ENCODE measurements at regions of chrX and their contacts with region 1.

Region 1: GRCh38 chrX:19747652-19748610 is 139.5 kb downstream of the SH3KBP1 start:
- DNase-seq: no peak
- ATAC-seq: peak; percentile 48
- H3K4me3 ChIP-seq: no peak overlapping the region
- H3K27ac ChIP-seq: peak overlapping the region; percentile 91
- H3K4me1 ChIP-seq: peaks cover 59% of the 10 kb centered on the region
- H3K27me3 ChIP-seq: no peaks in the 10 kb centered on the region
- CTCF ChIP-seq: no peak
- EP300 ChIP-seq: peak in 1 of 2 experiments; percentile 33; a peak in 1 of 4 replicates
- POLR2A ChIP-seq: no peak
- RAD21 ChIP-seq: no peak

Region 2: GRCh38 chrX:19725641-19726040 is 22.3 kb before region 1 on chrX:
- CTCF ChIA-PET with region 1: interaction called, 15 read pairs
- POLR2A ChIA-PET with region 1: interaction called, 4 read pairs
- RAD21 ChIA-PET with region 1: interaction called, 14 read pairs
- SMC1A ChIA-PET with region 1: interaction called, 624 read pairs
- in situ Hi-C with region 1: no loop called
- intact Hi-C with region 1: no loop called
- DNase-seq: no peak
- ATAC-seq: peak; percentile 18
- H3K4me3 ChIP-seq: no peak overlapping the region
- H3K27ac ChIP-seq: no peak overlapping the region
- H3K4me1 ChIP-seq: peaks cover 2% of the 10 kb centered on the region
- H3K27me3 ChIP-seq: no peaks in the 10 kb centered on the region
- CTCF ChIP-seq: no peak
- EP300 ChIP-seq: no peak
- POLR2A ChIP-seq: no peak; the same call in 1 of the 2 replicates
- RAD21 ChIP-seq: no peak

Region 3: GRCh38 chrX:19765628-19766027 is 17.7 kb after region 1 on chrX:
- CTCF ChIA-PET with region 1: interaction called, 16 read pairs
- POLR2A ChIA-PET with region 1: interaction called, 42 read pairs
- RAD21 ChIA-PET with region 1: interaction called, 65 read pairs
- SMC1A ChIA-PET with region 1: interaction called, 624 read pairs
- in situ Hi-C with region 1: no loop called
- intact Hi-C with region 1: no loop called
- DNase-seq: no peak
- ATAC-seq: peak; percentile 19
- H3K4me3 ChIP-seq: no peak overlapping the region
- H3K27ac ChIP-seq: no peak overlapping the region
- H3K4me1 ChIP-seq: peaks cover 30% of the 10 kb centered on the region
- H3K27me3 ChIP-seq: no peaks in the 10 kb centered on the region
- CTCF ChIP-seq: no peak
- EP300 ChIP-seq: no peak
- POLR2A ChIP-seq: no peak
- RAD21 ChIP-seq: no peak

Region 4: DNA sequence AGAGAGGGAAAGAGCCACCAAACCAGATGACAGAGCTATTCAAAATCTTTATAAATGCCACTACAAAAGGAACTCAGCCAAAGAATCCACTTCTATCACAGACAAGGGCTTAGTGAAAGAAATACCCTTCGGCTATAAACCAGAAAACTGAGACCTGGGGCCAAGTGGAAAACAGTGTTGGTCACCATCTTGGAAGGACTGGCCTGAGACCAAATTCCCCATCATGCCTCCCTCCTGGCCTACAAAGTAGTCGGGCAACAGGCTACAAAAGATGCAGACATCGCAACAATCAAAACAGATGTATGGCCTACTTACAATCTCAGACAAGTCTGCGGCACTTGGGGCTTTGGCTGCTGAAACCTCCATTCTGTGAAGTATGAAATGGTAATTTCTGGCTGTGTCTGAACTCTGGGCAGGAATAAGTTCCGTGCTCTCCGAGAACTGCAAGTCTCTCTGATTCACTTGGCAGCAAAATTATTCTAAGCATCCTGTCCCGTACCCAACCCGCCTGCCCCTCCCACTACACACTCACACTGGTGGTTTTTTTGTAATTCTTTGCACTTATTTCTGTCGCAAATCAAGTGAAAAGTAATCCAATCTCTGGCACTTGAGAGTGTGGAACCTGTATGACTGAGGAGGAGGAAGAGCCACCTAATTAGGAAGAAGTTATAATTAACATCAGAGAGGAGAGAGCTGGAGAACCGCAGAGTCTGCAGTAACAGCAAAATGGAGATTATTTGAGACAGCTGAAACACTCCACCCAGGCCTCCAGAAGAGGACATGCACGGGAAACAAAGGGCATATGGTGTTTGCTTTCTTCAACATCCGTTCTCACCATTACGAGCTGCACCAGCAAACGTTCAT is 51.6 kb after region 1 on chrX:
- CTCF ChIA-PET with region 1: interaction called, 3 read pairs
- POLR2A ChIA-PET with region 1: no interaction called
- RAD21 ChIA-PET with region 1: interaction called, 9 read pairs
- SMC1A ChIA-PET with region 1: interaction called, 12 read pairs
- in situ Hi-C with region 1: no loop called
- intact Hi-C with region 1: loop called (anchors 5 kb)
- DNase-seq: no peak
- ATAC-seq: no peak
- H3K4me3 ChIP-seq: peak overlapping the region; percentile 8; the same call in 1 of the 2 replicates
- H3K27ac ChIP-seq: peak overlapping the region; percentile 73
- H3K4me1 ChIP-seq: peaks cover 19% of the 10 kb centered on the region
- H3K27me3 ChIP-seq: no peaks in the 10 kb centered on the region
- CTCF ChIP-seq: no peak
- EP300 ChIP-seq: no peak
- POLR2A ChIP-seq: no peak
- RAD21 ChIP-seq: no peak

Region 5: GRCh38 chrX:19840899-19841648 is 93.1 kb after region 1 on chrX:
- CTCF ChIA-PET with region 1: interaction called, 4 read pairs
- POLR2A ChIA-PET with region 1: interaction called, 7 read pairs
- RAD21 ChIA-PET with region 1: interaction called, 21 read pairs
- SMC1A ChIA-PET with region 1: interaction called, 12 read pairs
- in situ Hi-C with region 1: no loop called
- intact Hi-C with region 1: loop called (anchors 5 kb)
- DNase-seq: peak; percentile 64
- ATAC-seq: peak; percentile 74
- H3K4me3 ChIP-seq: no peak overlapping the region
- H3K27ac ChIP-seq: peak overlapping the region; percentile 81
- H3K4me1 ChIP-seq: peaks cover 30% of the 10 kb centered on the region
- H3K27me3 ChIP-seq: no peaks in the 10 kb centered on the region
- CTCF ChIP-seq: no peak
- EP300 ChIP-seq: 0 out of 4 replicates have a peak, but pooled peaks of 1 of the 2 experiments have one; percentile 10
- POLR2A ChIP-seq: peak; percentile 66
- RAD21 ChIP-seq: no peak

Region 6: DNA sequence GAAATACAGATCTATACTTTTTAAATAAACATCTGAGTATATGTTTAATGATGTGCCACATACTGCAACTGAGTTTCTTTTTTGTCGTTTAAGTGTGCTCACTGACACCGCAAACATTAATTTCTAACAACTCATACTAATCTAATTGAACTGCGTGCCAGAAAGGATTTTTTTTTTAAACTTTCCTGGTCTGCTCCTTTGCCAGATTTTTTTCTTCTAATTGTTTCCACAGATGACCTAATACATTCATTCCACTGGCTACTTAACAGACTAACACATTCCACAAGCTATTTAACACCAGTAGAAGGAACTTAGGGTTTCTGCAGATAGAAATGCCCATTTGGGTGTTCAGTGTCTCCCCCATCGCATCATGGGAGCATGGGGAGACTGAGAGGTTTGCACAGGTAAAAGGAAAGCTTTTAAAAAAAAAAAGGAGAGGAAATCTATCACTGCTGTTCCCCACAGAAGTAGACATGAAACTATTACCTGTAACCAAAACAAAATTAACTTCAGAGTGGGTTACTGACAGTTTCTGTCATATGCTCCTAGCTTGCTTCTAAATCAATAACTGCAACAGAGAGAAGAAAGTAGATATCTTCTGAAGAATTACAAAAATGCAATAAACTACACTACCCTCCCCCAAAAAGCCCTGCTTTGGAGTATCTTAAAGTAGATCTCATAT is 107.9 kb after region 1 on chrX:
- CTCF ChIA-PET with region 1: interaction called, 4 read pairs
- POLR2A ChIA-PET with region 1: interaction called, 25 read pairs
- RAD21 ChIA-PET with region 1: interaction called, 17 read pairs
- SMC1A ChIA-PET with region 1: interaction called, 22 read pairs
- in situ Hi-C with region 1: no loop called
- intact Hi-C with region 1: loop called (anchors 5 kb)
- DNase-seq: no peak
- ATAC-seq: peak; percentile 36
- H3K4me3 ChIP-seq: no peak overlapping the region
- H3K27ac ChIP-seq: peak overlapping the region; percentile 88
- H3K4me1 ChIP-seq: peaks cover 21% of the 10 kb centered on the region
- H3K27me3 ChIP-seq: no peaks in the 10 kb centered on the region
- CTCF ChIP-seq: no peak
- EP300 ChIP-seq: no peak
- POLR2A ChIP-seq: no peak
- RAD21 ChIP-seq: no peak